Activated B cell treated with CpG ODN at 0.5 μM for 24 hours (primary cell): ENCODE measurements at regions of chr17 and their contacts with region 1.

Region 1: DNA sequence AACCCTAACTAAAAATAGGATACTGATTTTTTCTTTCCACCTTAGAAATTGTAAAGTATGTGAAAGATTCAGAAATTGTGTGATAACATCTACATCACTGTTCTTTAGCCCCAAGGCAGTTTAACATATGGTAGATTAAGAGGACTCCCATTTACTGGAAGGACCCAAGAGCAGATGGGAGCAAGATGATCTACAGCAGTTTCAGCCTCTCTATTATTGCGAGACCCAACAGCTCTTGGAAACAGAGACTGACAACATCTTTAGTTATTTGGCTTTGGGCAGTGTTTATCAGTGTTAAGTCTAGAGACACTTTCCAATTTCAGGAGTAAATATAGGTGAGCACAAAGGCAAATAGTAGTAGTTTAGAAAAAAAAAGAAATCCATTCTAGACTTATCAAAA is 124.9 kb upstream of the CORO6 start:
- DNase-seq: no peak
- ATAC-seq: no peak
- H3K4me3 Mint-ChIP-seq: no peak overlapping the region
- H3K27ac Mint-ChIP-seq: peak overlapping the region; percentile 24
- H3K4me1 Mint-ChIP-seq: peaks cover 71% of the 10 kb centered on the region
- H3K27me3 Mint-ChIP-seq: no peaks in the 10 kb centered on the region
- CTCF ChIP-seq: no peak

Region 2: GRCh38 chr17:29589524-29590410 is 157.9 kb before region 1 on chr17 and contains the start of gene GIT1:
- CTCF ChIA-PET with region 1: no interaction called
- POLR2A ChIA-PET with region 1: interaction called, 12 read pairs
- intact Hi-C with region 1: no loop called
- DNase-seq: peak; percentile 88
- ATAC-seq: peak; percentile 83
- H3K4me3 Mint-ChIP-seq: peak within 1 kb of the TSS; percentile 87
- H3K27ac Mint-ChIP-seq: peak within 1 kb of the TSS; percentile 83
- H3K4me1 Mint-ChIP-seq: peaks cover 73% of the 10 kb centered on the region
- H3K27me3 Mint-ChIP-seq: no peaks in the 10 kb centered on the region
- CTCF ChIP-seq: no peak
- total RNA-seq, gene GIT1: 41.7 and 45.3 TPM in 2 replicates

Region 3: GRCh38 chr17:29732613-29733012 is 15.0 kb before region 1 on chr17:
- CTCF ChIA-PET with region 1: no interaction called
- POLR2A ChIA-PET with region 1: interaction called, 10 read pairs
- intact Hi-C with region 1: no loop called
- DNase-seq: no peak
- ATAC-seq: no peak
- H3K4me3 Mint-ChIP-seq: no peak overlapping the region
- H3K27ac Mint-ChIP-seq: peak overlapping the region; percentile 59
- H3K4me1 Mint-ChIP-seq: peaks cover 61% of the 10 kb centered on the region
- H3K27me3 Mint-ChIP-seq: no peaks in the 10 kb centered on the region
- CTCF ChIP-seq: no peak